ENCODE measurements at regions of chr1 and their contacts with region 1.

Region 1: DNA sequence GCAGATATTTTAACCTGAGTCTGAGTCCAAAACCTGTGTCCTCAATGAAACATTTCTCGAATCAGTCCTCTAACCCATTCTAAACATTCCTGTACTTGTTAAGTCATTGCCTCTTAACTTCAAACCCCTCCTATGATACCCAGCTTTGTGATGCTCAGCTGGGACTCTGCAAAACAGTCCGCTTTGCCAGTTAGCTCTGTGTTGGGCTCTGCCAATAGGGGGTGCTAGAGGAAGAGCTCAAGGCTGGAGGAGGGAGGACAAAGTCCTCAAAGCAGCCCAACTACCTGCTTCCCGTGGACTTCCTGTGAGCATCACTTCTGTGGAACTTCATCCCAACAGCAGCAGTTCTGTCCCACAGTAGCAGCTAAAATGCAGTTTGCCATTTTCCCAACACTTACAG is 38.1 kb upstream of the SYT14 start:
- DNase-seq: no peak
- H3K4me3 ChIP-seq: no peak overlapping the region
- H3K27ac ChIP-seq: peak overlapping the region; percentile 96
- H3K4me1 ChIP-seq: peaks cover 44% of the 10 kb centered on the region
- H3K27me3 ChIP-seq: no peaks in the 10 kb centered on the region
- CTCF ChIP-seq: peak; percentile 44 to 51

Region 2: GRCh38 chr1:209747580-209748262 is 152.2 kb before region 1 on chr1:
- CTCF ChIA-PET with region 1: no interaction called
- dilution Hi-C with region 1: no loop called
- in situ Hi-C with region 1: no loop called
- intact Hi-C with region 1: no loop called
- DNase-seq: peak; percentile 97
- H3K4me3 ChIP-seq: no peak overlapping the region
- H3K27ac ChIP-seq: no peak overlapping the region
- H3K4me1 ChIP-seq: peaks cover 7% of the 10 kb centered on the region
- H3K27me3 ChIP-seq: no peaks in the 10 kb centered on the region
- CTCF ChIP-seq: peak; percentile 69 to 74

Region 3: GRCh38 chr1:209805875-209806760 is 93.8 kb before region 1 on chr1 and contains the start of gene IRF6:
- CTCF ChIA-PET with region 1: no interaction called
- dilution Hi-C with region 1: loop called (anchors 5 kb)
- in situ Hi-C with region 1: no loop called
- intact Hi-C with region 1: no loop called
- DNase-seq: peak; percentile 99
- H3K4me3 ChIP-seq: peak within 1 kb of the TSS; percentile 68 to 96 (median 77)
- H3K27ac ChIP-seq: peak within 1 kb of the TSS; percentile 99
- H3K4me1 ChIP-seq: peaks cover 63% of the 10 kb centered on the region
- H3K27me3 ChIP-seq: no peaks in the 10 kb centered on the region
- CTCF ChIP-seq: no peak
- total RNA-seq, gene IRF6: 261 to 422 TPM

Region 4: DNA sequence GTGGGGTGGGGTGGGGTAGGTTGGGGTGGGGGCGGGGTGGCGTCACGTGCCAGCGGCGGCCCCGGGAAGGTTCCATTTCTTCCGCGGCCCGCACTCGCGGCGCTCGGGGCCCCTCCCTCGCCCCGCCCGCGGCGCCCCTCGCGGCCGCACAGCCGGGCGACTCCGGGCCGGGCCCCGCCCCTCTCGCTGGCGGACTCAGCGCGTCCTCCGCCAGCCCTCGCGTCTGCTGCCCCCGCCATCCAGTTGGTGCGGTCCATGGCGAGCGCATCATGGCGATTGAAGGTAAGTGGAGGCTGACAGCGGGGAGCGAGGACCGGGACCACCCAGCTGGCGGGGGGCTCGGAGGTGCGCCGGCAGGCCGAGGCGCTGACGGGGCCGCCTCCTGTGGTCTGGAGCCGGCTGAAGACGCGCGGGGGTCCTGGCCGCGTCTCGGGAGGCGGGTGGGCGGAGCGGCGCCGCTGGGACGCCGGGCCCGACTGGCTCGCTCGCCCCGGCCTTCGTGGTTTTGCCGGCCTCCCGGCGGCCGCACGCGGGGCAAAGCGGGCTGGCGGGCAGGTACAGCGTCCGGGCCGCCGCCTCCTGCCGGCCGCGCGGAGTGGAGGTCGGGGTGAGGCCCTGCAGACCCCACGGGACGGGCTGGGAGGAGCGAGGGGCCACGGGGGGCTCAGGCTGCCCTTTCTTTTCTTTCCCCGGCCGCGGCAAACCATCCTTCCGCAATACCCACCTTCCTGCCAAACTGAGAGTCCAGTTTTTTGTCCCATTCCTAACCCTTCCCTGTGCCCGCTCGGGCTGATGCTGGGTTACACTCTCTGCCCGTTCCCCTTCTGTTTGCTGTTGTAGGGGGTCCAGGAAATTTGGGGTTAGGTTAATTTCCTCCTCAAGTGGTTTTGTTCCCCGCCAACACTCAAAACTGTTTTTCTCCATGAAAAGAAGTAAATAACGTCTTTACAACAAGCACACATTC is 38.3 kb after region 1 on chr1 and contains the start of gene SYT14:
- CTCF ChIA-PET with region 1: interaction called, 3 read pairs
- dilution Hi-C with region 1: no loop called
- in situ Hi-C with region 1: no loop called
- intact Hi-C with region 1: loop called (anchors 2 kb)
- DNase-seq: peak; percentile 76
- H3K4me3 ChIP-seq: peak within 1 kb of the TSS; percentile 71 to 87 (median 82)
- H3K27ac ChIP-seq: peak within 1 kb of the TSS; percentile 70
- H3K4me1 ChIP-seq: peaks cover 5% of the 10 kb centered on the region
- H3K27me3 ChIP-seq: no peaks in the 10 kb centered on the region
- CTCF ChIP-seq: peak in 1 of 2 donors; percentile 32
- total RNA-seq, gene SYT14: 5.8 to 13.4 TPM

Region 5: DNA sequence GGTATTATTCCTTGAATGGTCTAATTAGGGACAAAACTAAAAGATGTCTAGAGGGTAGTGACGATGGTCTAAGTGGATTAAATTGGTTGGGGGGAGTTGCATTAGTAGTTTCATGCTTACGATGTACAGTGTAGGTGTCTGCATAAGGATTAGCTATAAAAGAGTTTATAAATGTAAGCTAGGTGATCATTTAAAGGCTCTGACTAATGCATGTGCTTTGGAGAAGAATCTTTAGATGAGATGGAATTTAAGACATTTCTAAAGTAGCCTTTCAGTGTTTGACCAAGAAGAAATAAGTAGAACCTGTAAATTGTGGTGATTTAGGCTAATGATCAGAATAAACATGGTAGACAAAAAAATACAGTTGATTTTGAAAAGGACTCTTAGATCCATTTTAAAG is 45.4 kb after region 1 on chr1:
- CTCF ChIA-PET with region 1: no interaction called
- dilution Hi-C with region 1: loop called (anchors 5 kb)
- in situ Hi-C with region 1: no loop called
- intact Hi-C with region 1: no loop called
- DNase-seq: no peak
- H3K4me3 ChIP-seq: no peak overlapping the region
- H3K27ac ChIP-seq: no peak overlapping the region
- H3K4me1 ChIP-seq: no peaks in the 10 kb centered on the region
- H3K27me3 ChIP-seq: no peaks in the 10 kb centered on the region
- CTCF ChIP-seq: no peak

Region 6: GRCh38 chr1:209956116-209956515 is 56.2 kb after region 1 on chr1:
- CTCF ChIA-PET with region 1: no interaction called
- dilution Hi-C with region 1: no loop called
- in situ Hi-C with region 1: no loop called
- intact Hi-C with region 1: no loop called
- DNase-seq: peak; percentile 35
- H3K4me3 ChIP-seq: no peak overlapping the region
- H3K27ac ChIP-seq: no peak overlapping the region
- H3K4me1 ChIP-seq: no peaks in the 10 kb centered on the region
- H3K27me3 ChIP-seq: no peaks in the 10 kb centered on the region
- CTCF ChIP-seq: no peak

Region 7: DNA sequence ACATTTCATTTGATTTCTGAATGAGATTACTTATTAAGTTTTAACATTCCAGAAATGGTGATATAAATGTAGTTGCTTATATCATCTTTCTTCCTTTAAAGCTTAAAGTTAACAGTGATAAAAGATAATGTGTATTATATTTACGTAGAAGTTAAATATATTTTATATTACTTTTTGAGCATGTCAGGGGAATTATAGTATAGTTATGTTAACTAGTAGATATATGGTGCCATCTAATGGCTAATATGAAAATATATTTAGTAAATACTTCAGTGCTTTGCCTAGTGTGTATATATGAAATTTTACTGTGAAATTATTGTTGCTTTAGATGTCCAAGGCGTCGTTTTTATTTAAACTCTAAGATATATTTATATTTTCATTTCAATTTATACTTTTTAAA is 89.6 kb after region 1 on chr1:
- CTCF ChIA-PET with region 1: no interaction called
- dilution Hi-C with region 1: no loop called
- in situ Hi-C with region 1: no loop called
- intact Hi-C with region 1: no loop called
- DNase-seq: peak; percentile 11
- H3K4me3 ChIP-seq: no peak overlapping the region
- H3K27ac ChIP-seq: no peak overlapping the region
- H3K4me1 ChIP-seq: peaks cover 5% of the 10 kb centered on the region
- H3K27me3 ChIP-seq: no peaks in the 10 kb centered on the region
- CTCF ChIP-seq: peak; percentile 18 to 34